Left lung (tissue), 14 donors: ENCODE measurements at regions of chr18 and their contacts with region 1.

Region 1: GRCh38 chr18:21191596-21192307 is 50.3 kb upstream of the GREB1L start:
- DNase-seq: peak in 2 of 4 donors; percentile 54 to 56
- ATAC-seq: peak; percentile 90
- H3K4me3 ChIP-seq: no peak overlapping the region
- H3K27ac ChIP-seq: no peak overlapping the region
- H3K4me1 ChIP-seq: no peaks in the 10 kb centered on the region
- H3K27me3 ChIP-seq: peaks cover 0 to 7% of the 10 kb centered on the region in 2 donors
- CTCF ChIP-seq: peak in 1 of 2 donors; percentile 43

Region 2: GRCh38 chr18:21281611-21282010 is 89.9 kb after region 1 on chr18:
- intact Hi-C with region 1: no loop called
- DNase-seq: no peak
- ATAC-seq: no peak
- H3K4me3 ChIP-seq: no peak overlapping the region
- H3K27ac ChIP-seq: no peak overlapping the region
- H3K4me1 ChIP-seq: no peaks in the 10 kb centered on the region
- H3K27me3 ChIP-seq: no peaks in the 10 kb centered on the region
- CTCF ChIP-seq: no peak

Region 3: DNA sequence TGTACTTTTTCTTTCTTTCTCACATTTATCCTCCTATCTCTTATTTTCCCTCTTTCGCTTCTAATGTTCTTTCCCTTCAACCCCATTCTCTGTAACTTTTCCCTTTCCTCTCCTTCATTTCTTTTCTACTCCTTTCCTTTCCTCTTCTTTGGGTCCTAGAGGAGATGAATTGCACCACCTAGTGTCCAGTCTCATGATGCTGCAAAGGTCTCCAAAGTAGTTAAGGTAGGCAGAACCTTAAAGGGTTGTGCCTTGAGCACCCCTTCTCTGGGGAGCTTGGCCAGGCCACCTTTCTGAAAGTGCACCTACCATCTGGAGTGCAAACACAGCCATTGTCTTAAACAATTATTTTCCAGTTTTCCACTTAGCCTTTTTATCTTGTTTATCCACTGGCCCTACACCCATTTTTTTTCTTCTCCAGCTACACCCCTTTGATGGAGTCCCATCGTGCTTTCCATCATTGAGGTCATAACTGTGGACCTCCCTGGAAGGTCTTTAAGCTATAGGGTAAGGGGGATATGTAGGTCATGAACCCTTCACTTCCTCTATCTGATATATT is 252.8 kb after region 1 on chr18:
- intact Hi-C with region 1: loop called (anchors 10 kb)
- DNase-seq: peak in 2 of 4 donors; percentile 31 to 56
- ATAC-seq: peak; percentile 75
- H3K4me3 ChIP-seq: no peak overlapping the region
- H3K27ac ChIP-seq: no peak overlapping the region
- H3K4me1 ChIP-seq: no peaks in the 10 kb centered on the region
- H3K27me3 ChIP-seq: no peaks in the 10 kb centered on the region
- CTCF ChIP-seq: peak; percentile 49 to 59

Region 4: DNA sequence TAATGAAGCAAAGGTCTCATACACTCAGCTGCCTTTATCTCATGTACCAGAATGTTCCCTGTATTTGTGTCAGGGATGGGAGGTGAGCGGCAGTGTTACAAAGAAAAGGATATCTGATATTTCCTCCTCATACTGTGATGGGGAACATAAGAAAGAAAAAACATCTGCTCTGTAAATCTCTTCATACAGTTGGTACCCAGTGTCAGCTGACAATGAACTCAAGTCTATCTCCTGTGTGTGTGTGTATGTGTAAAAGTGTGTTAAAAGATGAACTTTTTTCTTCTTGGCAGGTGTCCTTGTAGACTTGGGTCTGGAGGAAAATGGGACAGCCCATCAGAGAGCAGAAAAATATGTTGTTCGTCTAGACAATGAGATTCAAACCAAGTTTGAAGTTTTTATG is 281.0 kb after region 1 on chr18:
- intact Hi-C with region 1: no loop called
- DNase-seq: no peak
- ATAC-seq: no peak
- H3K4me3 ChIP-seq: no peak overlapping the region
- H3K27ac ChIP-seq: no peak overlapping the region
- H3K4me1 ChIP-seq: no peaks in the 10 kb centered on the region
- H3K27me3 ChIP-seq: no peaks in the 10 kb centered on the region
- CTCF ChIP-seq: no peak